ENCODE measurements at regions of chr17 and their contacts with region 1.

Region 1: GRCh38 chr17:81871387-81872230 is 472 bp upstream of the ARHGDIA start:
- DNase-seq: peak; percentile 91 to 98 (median 96)
- ATAC-seq: peak; percentile 39
- H3K4me3 ChIP-seq: peak overlapping the region; percentile 83
- H3K4me3 Mint-ChIP-seq: peak overlapping the region; percentile 90
- H3K27ac ChIP-seq: peak overlapping the region; percentile 95 to 98
- H3K27ac Mint-ChIP-seq: peak overlapping the region; percentile 95
- H3K4me1 ChIP-seq: peaks cover 57% of the 10 kb centered on the region
- H3K4me1 Mint-ChIP-seq: peaks cover 43% of the 10 kb centered on the region
- H3K27me3 ChIP-seq: peaks cover 0 to 3% of the 10 kb centered on the region in 2 experiments
- H3K27me3 Mint-ChIP-seq: no peaks in the 10 kb centered on the region
- CTCF ChIP-seq: peak; percentile 49

Region 2: DNA sequence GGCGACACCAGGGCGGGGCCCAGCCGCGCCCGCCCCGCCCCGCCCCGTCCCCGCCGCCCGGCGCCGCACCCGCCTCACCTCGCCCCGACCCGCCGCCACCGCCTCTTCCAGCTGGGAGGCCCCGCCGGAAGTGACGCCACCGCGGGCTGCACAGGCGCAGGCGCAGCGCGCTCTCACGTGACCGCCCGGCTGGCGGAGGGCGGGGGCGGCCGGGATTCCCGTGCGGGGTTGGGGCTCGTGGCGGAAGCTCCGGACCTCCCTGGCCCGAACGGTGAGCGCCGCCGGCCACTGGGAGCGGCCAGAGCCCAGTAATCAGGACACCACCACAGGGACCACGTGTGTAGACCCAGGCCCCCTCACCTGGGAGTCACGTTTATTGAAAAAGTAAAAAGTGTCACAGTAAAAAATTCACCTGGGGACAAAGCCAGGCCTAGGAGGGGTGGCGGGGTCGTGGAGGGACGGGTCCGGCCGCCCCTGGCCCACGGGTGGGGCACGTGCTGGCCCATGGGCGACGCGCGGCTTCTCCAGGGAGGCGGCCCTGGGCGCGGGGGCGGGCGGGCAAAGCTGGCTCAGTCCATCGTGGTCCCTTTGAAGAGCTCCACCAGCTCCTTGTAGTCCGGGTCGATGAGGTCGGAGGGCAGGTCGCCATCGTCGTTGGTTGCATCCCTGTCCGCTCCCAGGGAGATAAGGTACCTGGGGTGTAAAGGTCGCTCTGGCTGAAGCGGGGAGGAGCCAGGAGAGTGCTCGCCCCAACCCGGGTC is 38.3 kb before region 1 on chr17 and contains the start of gene MCRIP1:
- CTCF ChIA-PET with region 1: no interaction called
- POLR2A ChIA-PET with region 1: interaction called, 10 read pairs
- intact Hi-C with region 1: loop called in 1 of 2 experiments (anchors 5 kb)
- DNase-seq: peak; percentile 82 to 98 (median 92)
- ATAC-seq: peak; percentile 78
- H3K4me3 ChIP-seq: peak within 1 kb of the TSS; percentile 80
- H3K4me3 Mint-ChIP-seq: peak within 1 kb of the TSS; percentile 93
- H3K27ac ChIP-seq: peak within 1 kb of the TSS; percentile 72 to 91
- H3K27ac Mint-ChIP-seq: peak within 1 kb of the TSS; percentile 88
- H3K4me1 ChIP-seq: peaks cover 28% of the 10 kb centered on the region
- H3K4me1 Mint-ChIP-seq: peaks cover 19% of the 10 kb centered on the region
- H3K27me3 ChIP-seq: no peaks in the 10 kb centered on the region
- H3K27me3 Mint-ChIP-seq: no peaks in the 10 kb centered on the region
- CTCF ChIP-seq: no peak
- total RNA-seq, gene MCRIP1: 36.9 to 37.7 TPM

Region 3: DNA sequence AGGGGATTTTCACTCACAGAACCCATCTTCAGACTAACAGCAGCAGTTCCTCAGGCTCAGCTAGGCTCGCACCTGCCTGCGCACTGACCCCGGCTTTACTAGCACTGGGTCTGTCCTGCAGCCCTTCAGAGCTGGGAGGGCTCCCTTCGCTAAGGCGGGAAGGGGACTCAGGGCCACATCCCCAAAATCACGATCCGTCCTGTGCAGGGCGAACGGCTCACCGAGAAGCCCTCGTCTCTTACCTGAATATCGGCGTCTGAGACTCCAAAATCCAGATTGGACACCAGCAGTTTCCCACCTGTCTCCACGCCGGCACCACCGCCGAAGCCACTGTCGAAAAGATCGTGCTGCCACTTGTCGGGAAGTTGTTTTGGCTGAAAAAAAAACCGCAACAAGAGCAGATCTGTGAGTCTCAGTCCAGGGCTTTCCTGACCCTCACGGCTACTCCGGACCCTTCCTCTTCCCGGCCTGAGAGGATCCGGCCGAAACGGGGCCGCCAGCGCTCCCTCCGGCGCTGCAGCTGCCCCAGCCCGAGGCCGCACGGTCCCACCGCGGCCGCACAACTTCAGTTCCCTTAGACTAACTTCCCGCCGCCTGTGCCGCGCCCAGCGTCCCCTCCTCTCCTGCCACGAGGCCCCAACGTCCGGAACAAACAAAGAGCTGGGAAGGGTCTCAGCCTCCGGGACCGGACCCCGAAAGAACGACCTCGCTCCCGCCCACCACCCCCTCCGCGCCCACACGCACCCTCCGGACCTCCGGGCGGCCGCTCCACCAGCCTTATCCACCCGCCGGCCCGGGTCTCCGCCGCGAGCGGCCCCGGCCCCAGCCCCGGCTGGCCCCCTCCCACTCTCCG is 19.1 kb after region 1 on chr17:
- CTCF ChIA-PET with region 1: interaction called, 5 read pairs
- POLR2A ChIA-PET with region 1: interaction called, 23 read pairs
- intact Hi-C with region 1: loop called in 1 of 2 experiments (anchors 1 kb)
- DNase-seq: peak in 4 of 14 experiments; percentile 7 to 55 (median 45)
- ATAC-seq: no peak
- H3K4me3 ChIP-seq: peak overlapping the region; percentile 58
- H3K4me3 Mint-ChIP-seq: peak overlapping the region; percentile 94
- H3K27ac ChIP-seq: peak overlapping the region; percentile 35 to 37
- H3K27ac Mint-ChIP-seq: peak overlapping the region; percentile 95
- H3K4me1 ChIP-seq: peaks cover 27% of the 10 kb centered on the region
- H3K4me1 Mint-ChIP-seq: peaks cover 7% of the 10 kb centered on the region
- H3K27me3 ChIP-seq: no peaks in the 10 kb centered on the region
- H3K27me3 Mint-ChIP-seq: no peaks in the 10 kb centered on the region
- CTCF ChIP-seq: no peak

Region 4: DNA sequence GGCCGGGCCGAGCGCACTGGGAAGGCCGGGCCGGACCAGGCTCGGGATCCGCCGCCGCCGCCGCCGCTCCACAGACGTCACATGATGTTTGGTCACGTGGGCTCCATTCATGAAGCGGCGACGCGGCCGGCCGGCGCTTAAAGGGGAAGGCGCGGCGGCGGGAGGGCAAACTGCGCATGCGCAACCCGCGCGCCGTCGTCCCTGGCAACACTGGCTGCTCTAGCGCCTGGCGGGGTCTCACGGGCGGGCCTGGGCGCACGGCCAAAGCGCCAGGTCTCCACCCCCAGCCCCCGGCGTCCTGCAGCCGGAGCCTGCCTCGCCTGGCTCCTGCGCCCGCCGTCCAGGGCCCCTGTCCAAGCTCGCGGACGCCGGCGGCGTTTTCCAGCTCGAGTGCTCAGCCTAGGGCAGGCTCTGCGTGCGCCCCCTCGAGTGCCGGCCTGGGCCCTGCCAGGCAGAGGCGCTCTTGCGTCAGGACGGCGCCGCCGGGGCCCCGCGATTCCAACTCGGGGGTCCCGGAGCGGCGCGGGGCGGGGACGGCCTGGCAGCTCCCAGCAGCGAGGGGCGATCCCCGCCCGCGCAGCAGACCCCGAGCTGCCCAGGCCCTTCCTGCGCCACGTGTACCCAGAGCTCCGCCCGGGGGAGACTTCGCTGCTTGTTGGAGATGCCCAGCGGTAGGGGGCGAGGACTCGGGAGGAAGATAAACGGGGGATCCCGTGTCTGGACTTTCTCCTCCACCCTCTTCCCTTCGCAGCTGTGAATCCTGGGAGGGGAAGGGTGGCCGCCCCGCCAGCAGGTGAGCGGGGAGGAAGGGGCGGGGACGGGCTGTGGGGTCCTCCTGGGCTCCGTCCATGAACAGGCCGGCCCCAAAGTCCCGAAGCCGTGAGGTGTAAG is 56.3 kb after region 1 on chr17 and contains the start of gene MAFG:
- CTCF ChIA-PET with region 1: interaction called, 3 read pairs
- POLR2A ChIA-PET with region 1: interaction called, 13 read pairs
- intact Hi-C with region 1: loop called in 1 of 2 experiments (anchors 5 kb)
- DNase-seq: peak; percentile 78 to 97 (median 87)
- ATAC-seq: peak; percentile 58
- H3K4me3 ChIP-seq: peak within 1 kb of the TSS; percentile 61
- H3K4me3 Mint-ChIP-seq: peak within 1 kb of the TSS; percentile 88
- H3K27ac ChIP-seq: peak within 1 kb of the TSS; percentile 54 to 65
- H3K27ac Mint-ChIP-seq: peak within 1 kb of the TSS; percentile 88
- H3K4me1 ChIP-seq: peaks cover 51% of the 10 kb centered on the region
- H3K4me1 Mint-ChIP-seq: peaks cover 20% of the 10 kb centered on the region
- H3K27me3 ChIP-seq: peaks cover 19% of the 10 kb centered on the region in 2 experiments
- H3K27me3 Mint-ChIP-seq: peaks cover 16% of the 10 kb centered on the region
- CTCF ChIP-seq: no peak
- total RNA-seq, gene MAFG: 10.8 to 13.3 TPM

Region 5: GRCh38 chr17:82098072-82098821 is 226.6 kb after region 1 on chr17 and contains the start of gene FASN:
- CTCF ChIA-PET with region 1: no interaction called
- POLR2A ChIA-PET with region 1: no interaction called
- intact Hi-C with region 1: no loop called
- DNase-seq: peak; percentile 80 to 97 (median 91)
- ATAC-seq: peak; percentile 68
- H3K4me3 ChIP-seq: peak within 1 kb of the TSS; percentile 54
- H3K4me3 Mint-ChIP-seq: peak within 1 kb of the TSS; percentile 83
- H3K27ac ChIP-seq: peak within 1 kb of the TSS; percentile 58 to 73
- H3K27ac Mint-ChIP-seq: peak within 1 kb of the TSS; percentile 80
- H3K4me1 ChIP-seq: peaks cover 28% of the 10 kb centered on the region
- H3K4me1 Mint-ChIP-seq: peaks cover 3% of the 10 kb centered on the region
- H3K27me3 ChIP-seq: no peaks in the 10 kb centered on the region
- H3K27me3 Mint-ChIP-seq: no peaks in the 10 kb centered on the region
- CTCF ChIP-seq: no peak
- total RNA-seq, gene FASN: 168 to 174 TPM

Region 6: DNA sequence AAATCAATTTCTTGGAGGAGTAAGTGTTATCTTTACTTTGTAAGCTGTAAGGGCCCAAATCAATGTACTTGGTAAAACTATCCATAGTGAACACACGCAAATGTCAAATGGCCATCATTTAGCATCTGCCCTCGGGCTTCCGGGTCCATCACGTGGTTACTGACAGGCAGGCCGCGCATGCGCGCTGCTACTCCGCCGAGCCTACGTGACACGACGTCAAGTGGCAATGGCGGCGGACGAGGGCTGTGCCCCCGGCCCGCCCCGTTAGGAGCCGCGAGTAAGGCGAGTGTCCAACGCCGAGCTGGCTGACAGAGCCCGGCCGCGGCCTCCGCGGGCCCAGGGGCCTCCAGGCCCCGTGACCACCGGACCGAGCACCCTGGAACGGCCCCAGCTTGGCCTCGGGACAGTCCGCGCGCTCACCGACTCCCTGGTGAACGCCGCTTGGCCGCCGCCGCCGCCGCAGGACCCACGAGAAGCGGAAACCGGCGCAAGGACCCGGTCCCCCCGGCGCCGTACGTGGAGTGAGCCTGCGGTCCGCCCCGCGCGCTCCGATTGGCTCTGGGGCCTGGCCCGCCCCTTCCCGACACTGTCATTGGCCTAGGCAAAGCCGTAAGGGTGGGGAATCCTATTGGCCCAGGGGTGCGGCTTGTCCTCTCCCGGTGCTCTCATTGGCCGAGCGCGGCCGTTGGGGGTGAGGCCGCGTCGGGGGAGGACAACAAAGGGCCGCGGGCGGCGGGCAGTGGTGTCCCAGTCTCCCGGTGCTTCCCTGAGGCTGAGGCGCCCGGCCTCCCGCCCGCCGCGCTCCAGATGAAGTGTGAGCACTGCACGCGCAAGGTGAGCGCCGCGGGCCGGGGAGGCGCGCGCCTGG is 586.6 kb after region 1 on chr17 and contains the start of gene NARF:
- CTCF ChIA-PET with region 1: no interaction called
- POLR2A ChIA-PET with region 1: no interaction called
- intact Hi-C with region 1: loop called in 1 of 2 experiments (anchors 5 kb)
- DNase-seq: peak; percentile 89 to 98 (median 96)
- ATAC-seq: peak; percentile 96
- H3K4me3 ChIP-seq: peak within 1 kb of the TSS; percentile 89
- H3K4me3 Mint-ChIP-seq: peak within 1 kb of the TSS; percentile 91
- H3K27ac ChIP-seq: peak within 1 kb of the TSS; percentile 95 to 99
- H3K27ac Mint-ChIP-seq: peak within 1 kb of the TSS; percentile 99
- H3K4me1 ChIP-seq: peaks cover 39% of the 10 kb centered on the region
- H3K4me1 Mint-ChIP-seq: peaks cover 39% of the 10 kb centered on the region
- H3K27me3 ChIP-seq: no peaks in the 10 kb centered on the region
- H3K27me3 Mint-ChIP-seq: no peaks in the 10 kb centered on the region
- CTCF ChIP-seq: no peak
- total RNA-seq, gene NARF: 57.1 to 62.0 TPM